ENCODE measurements at regions of chr20 and their contacts with region 1.

Region 1: DNA sequence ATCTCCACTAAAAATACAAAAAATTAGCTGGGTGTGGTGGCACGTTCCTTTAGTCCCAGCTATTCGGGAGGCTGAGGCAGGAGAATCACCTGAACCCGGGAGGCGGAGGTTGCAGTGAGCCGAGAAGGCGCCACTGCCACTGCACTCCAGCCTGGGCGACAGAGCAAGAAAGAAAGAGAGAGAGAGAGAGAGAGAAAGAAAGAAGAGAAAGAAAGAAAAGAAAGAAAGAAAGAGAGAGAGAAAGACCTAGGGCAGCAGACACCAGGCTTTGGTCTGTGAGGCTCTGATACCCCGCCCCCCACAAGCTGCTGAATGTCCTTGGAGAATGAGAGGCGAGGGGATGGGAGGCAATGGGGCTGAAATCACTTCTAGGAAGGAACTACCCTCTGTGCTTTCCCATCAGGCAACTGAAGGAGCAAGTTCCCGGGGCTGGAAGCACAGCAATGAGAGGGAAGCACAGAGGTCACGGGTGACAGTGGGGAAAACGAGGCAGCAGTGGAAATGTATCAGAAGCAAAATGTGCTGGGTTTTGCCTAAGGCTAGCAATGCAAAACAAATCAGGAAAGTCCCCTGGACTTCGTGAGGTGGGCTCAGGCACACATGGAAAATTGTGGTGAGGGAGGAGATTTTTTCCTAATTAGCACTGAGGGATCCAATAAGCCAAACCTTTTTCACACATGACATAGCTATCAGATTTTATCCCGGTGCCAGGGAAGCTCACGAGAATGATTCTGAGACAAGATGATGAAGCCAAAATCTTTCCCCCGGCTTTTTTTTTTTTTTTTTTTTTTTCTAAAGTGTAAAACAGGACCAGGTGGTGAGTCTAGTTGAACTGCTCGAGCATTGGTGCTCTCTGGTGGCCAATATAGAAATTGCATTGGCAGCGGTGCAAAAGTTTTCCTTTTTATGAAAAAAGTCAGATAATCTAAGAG is 16.9 kb upstream of the ARFGEF2 start:
- H3K4me3 ChIP-seq: no peak overlapping the region
- H3K27ac ChIP-seq: no peak overlapping the region
- H3K4me1 ChIP-seq: no peaks in the 10 kb centered on the region
- CTCF ChIP-seq: 0 out of 2 replicates have a peak, but pooled peaks have one; percentile 33

Region 2: DNA sequence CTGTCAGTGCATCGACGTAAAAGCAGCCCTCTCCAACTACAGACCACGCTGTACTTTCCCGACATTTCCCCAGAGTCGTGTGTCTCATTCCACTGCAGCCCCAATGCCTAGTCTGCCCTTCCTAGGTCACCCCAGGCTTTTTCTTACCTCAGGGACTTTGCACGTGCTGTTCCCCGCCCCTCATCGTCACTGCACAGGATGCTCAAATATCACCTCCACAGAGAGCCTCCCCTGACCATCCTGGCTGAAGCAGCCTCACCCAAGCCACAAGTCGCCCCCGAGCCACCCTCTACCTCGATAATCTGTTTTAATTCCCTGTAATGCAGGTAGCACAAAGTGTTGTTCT is 137.0 kb before region 1 on chr20:
- CTCF ChIA-PET with region 1: no interaction called
- POLR2A ChIA-PET with region 1: no interaction called
- H3K4me3 ChIP-seq: no peak overlapping the region
- H3K27ac ChIP-seq: no peak overlapping the region
- H3K4me1 ChIP-seq: no peaks in the 10 kb centered on the region
- CTCF ChIP-seq: no peak

Region 3: DNA sequence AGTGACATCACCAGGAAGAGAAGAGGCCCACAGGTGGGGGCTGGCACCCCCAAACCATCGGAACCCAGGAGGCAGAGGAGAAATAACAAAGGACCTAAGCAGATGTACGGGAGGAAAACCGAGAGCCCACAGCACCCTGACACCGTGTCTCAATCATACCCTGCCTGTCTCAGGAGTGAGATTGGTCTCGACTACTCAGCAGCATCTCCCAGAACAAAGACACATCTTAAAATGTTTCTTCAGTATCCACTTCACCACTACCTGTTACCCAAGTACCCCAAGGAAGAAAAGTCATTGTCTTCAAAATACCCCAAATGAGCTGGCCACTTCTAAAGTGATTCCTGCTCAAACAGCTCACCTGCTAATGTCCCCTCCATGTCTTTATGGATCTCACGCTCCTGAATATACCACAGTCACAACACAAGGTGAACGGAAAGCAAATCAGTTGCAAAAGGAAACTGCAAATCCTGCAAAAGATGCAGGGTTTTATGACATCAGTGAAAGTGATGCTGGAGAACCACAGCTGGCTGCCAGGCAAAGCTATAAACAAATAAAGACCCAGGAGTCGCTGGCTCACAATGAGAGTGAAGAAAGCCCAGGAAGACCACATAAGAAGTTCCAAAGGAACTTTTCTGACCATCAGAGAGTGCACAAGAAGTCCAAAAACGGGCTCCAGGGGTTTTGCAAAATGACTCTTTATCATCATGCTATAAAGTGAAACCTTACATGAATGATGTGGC is 120.9 kb before region 1 on chr20:
- CTCF ChIA-PET with region 1: interaction called, 11 read pairs
- POLR2A ChIA-PET with region 1: no interaction called
- H3K4me3 ChIP-seq: no peak overlapping the region
- H3K27ac ChIP-seq: no peak overlapping the region
- H3K4me1 ChIP-seq: no peaks in the 10 kb centered on the region
- CTCF ChIP-seq: no peak

Region 4: GRCh38 chr20:48793808-48794762 is 110.5 kb before region 1 on chr20:
- CTCF ChIA-PET with region 1: no interaction called
- POLR2A ChIA-PET with region 1: no interaction called
- H3K4me3 ChIP-seq: no peak overlapping the region
- H3K27ac ChIP-seq: no peak overlapping the region
- H3K4me1 ChIP-seq: no peaks in the 10 kb centered on the region
- CTCF ChIP-seq: no peak

Region 5: GRCh38 chr20:48879609-48880245 is 24.9 kb before region 1 on chr20:
- CTCF ChIA-PET with region 1: interaction called, 15 read pairs
- POLR2A ChIA-PET with region 1: no interaction called
- H3K4me3 ChIP-seq: no peak overlapping the region
- H3K27ac ChIP-seq: no peak overlapping the region
- H3K4me1 ChIP-seq: no peaks in the 10 kb centered on the region
- CTCF ChIP-seq: no peak

Measured in HEK293 (cell line).